CD14-positive monocyte (primary cell): ENCODE measurements at regions of chr5 and their contacts with region 1.

Region 1: GRCh38 chr5:115169487-115170133 is at the start of gene TRIM36:
- DNase-seq: peak; percentile 89
- H3K4me3 ChIP-seq: peak within 1 kb of the TSS; percentile 62 to 89 (median 73)
- H3K4me3 Mint-ChIP-seq: peak within 1 kb of the TSS; percentile 89 to 92
- H3K27ac ChIP-seq: peak within 1 kb of the TSS in 1 of 2 donors; percentile 15
- H3K27ac Mint-ChIP-seq: peak within 1 kb of the TSS in 5 of 7 donors; percentile 31 to 77 (median 43)
- H3K4me1 ChIP-seq: peaks cover 19 to 26% of the 10 kb centered on the region in 2 donors
- H3K4me1 Mint-ChIP-seq: peaks cover 19% of the 10 kb centered on the region
- H3K27me3 ChIP-seq: peaks cover 37 to 77% of the 10 kb centered on the region in 2 donors
- H3K27me3 Mint-ChIP-seq: peaks cover 54 to 81% (median 61%) of the 10 kb centered on the region in 3 donors
- CTCF ChIP-seq: no peak
- polyA plus RNA-seq, gene TRIM36: 1.7 to 2.3 (median 1.9) TPM

Region 2: GRCh38 chr5:115231598-115231997 is 62.0 kb after region 1 on chr5:
- intact Hi-C with region 1: no loop called
- DNase-seq: no peak
- H3K4me3 ChIP-seq: no peak overlapping the region
- H3K4me3 Mint-ChIP-seq: no peak overlapping the region
- H3K27ac ChIP-seq: no peak overlapping the region
- H3K27ac Mint-ChIP-seq: no peak overlapping the region
- H3K4me1 ChIP-seq: no peaks in the 10 kb centered on the region
- H3K4me1 Mint-ChIP-seq: peaks cover 5% of the 10 kb centered on the region
- H3K27me3 ChIP-seq: no peaks in the 10 kb centered on the region
- H3K27me3 Mint-ChIP-seq: no peaks in the 10 kb centered on the region
- CTCF ChIP-seq: no peak

Region 3: DNA sequence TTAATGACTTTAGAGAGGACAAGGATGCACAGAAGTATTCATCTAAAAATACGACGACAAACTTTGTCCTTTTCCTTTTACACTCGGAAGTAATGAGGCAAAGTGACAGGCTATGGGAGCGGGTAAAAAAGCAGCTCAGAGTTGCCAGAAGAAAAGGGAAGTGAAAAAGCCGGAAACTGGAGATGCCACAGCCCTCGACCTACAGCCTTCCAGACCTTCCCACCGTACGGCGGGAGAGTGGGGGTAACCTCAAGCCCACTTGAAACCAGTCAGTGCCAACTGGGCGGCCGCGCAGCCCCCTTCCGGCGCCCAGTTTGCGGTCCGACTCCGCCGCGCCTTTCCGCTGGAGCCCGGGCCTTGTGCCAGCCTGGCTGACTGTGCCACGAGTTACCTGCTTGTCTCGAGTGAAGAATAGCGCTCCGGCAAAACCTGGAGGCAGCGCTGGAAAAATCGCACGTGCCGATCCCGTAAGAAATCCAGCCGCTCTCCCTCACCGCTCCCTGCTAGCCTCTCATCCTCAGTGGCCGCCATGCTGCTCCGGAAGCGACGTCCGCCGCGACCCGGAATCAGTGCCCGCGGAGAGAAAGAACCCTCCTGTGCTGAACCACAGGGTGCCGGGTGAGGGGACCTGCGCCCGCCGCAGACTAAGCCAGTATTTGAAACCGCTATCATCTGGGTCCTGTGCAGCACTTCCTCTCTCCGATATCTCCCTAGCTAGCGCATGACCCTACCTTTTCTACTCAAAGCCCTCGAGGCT is 92.9 kb after region 1 on chr5 and contains the start of gene PGGT1B:
- intact Hi-C with region 1: loop called in 1 of 2 experiments (anchors 10 kb)
- DNase-seq: peak; percentile 60 to 74 (median 65)
- H3K4me3 ChIP-seq: peak within 1 kb of the TSS; percentile 74 to 98 (median 85)
- H3K4me3 Mint-ChIP-seq: peak within 1 kb of the TSS; percentile 98 to 99
- H3K27ac ChIP-seq: peak within 1 kb of the TSS; percentile 61 to 93
- H3K27ac Mint-ChIP-seq: peak within 1 kb of the TSS; percentile 88 to 98 (median 96)
- H3K4me1 ChIP-seq: peaks cover 26 to 43% of the 10 kb centered on the region in 2 donors
- H3K4me1 Mint-ChIP-seq: peaks cover 52% of the 10 kb centered on the region
- H3K27me3 ChIP-seq: no peaks in the 10 kb centered on the region
- H3K27me3 Mint-ChIP-seq: no peaks in the 10 kb centered on the region
- CTCF ChIP-seq: no peak
- polyA plus RNA-seq, gene PGGT1B: 3.2 to 32.6 (median 11.6) TPM

Region 4: DNA sequence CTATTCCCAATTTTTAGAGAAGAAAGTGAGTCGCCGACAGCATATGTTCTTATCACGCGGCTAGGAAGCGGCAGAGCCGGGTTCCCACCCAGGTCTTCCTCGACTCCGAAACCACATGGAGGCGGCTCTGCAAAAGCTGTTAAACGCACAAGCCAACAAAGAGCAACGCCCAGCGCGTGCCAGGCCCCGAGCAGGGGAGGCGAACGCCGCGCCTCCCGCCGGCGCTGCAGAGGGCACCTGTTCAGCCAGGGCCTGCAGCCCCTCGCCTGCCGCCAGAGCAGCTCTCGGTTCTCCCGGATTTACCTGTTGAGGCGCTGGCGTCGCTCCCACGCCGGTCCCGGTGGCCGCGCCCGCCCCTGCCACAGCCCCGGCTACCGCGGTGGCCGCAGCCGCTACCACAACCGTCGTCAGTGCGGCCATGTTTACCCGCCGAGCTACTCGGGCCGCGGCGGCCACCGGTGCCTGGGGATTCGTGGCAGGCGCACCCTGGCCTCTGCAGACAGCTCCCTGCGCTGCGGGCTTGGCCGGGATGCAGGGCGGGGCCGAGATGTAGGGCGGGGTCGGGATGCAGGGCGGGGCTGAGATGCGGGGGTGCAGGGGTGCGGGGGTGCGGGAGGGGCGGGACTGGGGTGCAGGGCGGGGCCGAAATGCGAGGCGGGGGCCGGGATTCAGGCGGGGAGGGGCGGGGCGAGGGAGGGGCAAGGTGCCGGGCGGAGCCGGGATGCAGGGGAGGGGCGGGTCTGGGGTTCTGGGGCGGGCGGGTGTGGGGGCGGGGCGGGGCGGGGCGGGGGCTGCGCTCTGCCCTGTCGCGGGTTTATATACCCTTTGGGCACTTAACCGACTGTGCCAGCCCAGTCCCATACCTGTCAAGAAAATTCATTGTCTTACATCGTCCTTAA is 126.8 kb after region 1 on chr5 and contains the start of gene CCDC112:
- intact Hi-C with region 1: loop called in 1 of 2 experiments (anchors 10 kb)
- DNase-seq: peak; percentile 35 to 63 (median 57)
- H3K4me3 ChIP-seq: peak within 1 kb of the TSS; percentile 53 to 87 (median 69)
- H3K4me3 Mint-ChIP-seq: peak within 1 kb of the TSS; percentile 90 to 98
- H3K27ac ChIP-seq: peak within 1 kb of the TSS in 1 of 2 donors; percentile 76
- H3K27ac Mint-ChIP-seq: peak within 1 kb of the TSS in 5 of 7 donors; percentile 2 to 77 (median 38)
- H3K4me1 ChIP-seq: peaks cover 13% of the 10 kb centered on the region in 2 donors
- H3K4me1 Mint-ChIP-seq: peaks cover 20% of the 10 kb centered on the region
- H3K27me3 ChIP-seq: no peaks in the 10 kb centered on the region
- H3K27me3 Mint-ChIP-seq: peaks cover 0 to 8% (median 3%) of the 10 kb centered on the region in 3 donors
- CTCF ChIP-seq: no peak
- polyA plus RNA-seq, gene CCDC112: 4.3 to 6.2 (median 5.9) TPM

Region 5: DNA sequence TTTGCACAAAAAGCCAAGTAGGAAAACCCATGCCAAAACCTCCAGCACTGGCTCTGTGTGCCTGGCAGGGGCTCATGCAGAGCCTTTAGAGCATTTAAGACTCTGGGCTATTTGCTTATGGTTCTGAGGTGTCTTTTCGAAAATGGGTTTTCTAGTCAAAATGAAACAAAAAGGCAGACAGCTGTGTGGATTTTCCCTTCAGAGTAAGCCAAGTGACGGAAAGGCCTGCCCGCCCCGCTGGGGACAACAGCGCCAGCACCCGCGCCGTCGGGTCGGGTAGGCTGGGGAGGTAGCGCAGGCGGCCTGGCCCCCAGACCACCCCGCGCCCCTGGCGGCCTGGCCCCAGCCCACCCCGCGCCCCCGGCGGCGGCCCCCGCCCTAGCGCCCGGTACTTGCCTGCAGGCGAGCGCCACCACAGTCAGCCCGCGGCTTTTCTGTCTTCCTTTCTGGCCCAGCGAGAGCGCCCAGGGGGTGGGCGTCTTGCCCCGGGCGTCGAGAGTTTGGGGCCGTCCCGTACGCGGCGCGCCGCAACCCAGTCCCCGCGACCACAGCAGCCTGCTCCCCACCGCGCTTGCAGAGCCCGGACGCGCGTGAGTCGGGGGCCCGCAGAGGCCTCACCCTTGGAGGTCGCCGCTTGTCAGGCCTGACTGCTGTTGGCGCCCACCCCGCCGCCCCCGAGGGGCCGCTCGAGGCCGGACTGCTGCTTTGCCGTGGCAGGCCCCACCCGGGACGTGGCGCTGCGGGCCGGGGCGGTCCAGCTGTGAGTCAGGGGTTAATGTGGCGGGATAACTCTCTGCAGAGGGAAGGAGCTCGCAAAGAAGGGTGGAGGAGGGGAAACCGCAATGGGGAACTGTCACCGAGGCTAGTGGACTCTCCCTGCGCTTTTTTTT is 432.3 kb after region 1 on chr5 and contains the start of gene TICAM2:
- intact Hi-C with region 1: loop called in 1 of 2 experiments (anchors 10 kb)
- DNase-seq: peak; percentile 84 to 90 (median 87)
- H3K4me3 ChIP-seq: peak within 1 kb of the TSS; percentile 84 to 95 (median 89)
- H3K4me3 Mint-ChIP-seq: peak within 1 kb of the TSS; percentile 77 to 89
- H3K27ac ChIP-seq: peak within 1 kb of the TSS; percentile 84 to 93
- H3K27ac Mint-ChIP-seq: peak within 1 kb of the TSS; percentile 94 to 98 (median 96)
- H3K4me1 ChIP-seq: peaks cover 55 to 56% of the 10 kb centered on the region in 2 donors
- H3K4me1 Mint-ChIP-seq: peaks cover 53% of the 10 kb centered on the region
- H3K27me3 ChIP-seq: no peaks in the 10 kb centered on the region
- H3K27me3 Mint-ChIP-seq: peaks cover 0 to 3% (median 3%) of the 10 kb centered on the region in 3 donors
- CTCF ChIP-seq: peak; percentile 42
- polyA plus RNA-seq, gene TICAM2: 3.5 to 25.1 (median 14.6) TPM